Activated CD4-positive, alpha-beta T cell treated with anti-CD3 and anti-CD28 coated beads for 36 hours (primary cell): ENCODE measurements at regions of chr3 and their contacts with region 1.

Region 1: DNA sequence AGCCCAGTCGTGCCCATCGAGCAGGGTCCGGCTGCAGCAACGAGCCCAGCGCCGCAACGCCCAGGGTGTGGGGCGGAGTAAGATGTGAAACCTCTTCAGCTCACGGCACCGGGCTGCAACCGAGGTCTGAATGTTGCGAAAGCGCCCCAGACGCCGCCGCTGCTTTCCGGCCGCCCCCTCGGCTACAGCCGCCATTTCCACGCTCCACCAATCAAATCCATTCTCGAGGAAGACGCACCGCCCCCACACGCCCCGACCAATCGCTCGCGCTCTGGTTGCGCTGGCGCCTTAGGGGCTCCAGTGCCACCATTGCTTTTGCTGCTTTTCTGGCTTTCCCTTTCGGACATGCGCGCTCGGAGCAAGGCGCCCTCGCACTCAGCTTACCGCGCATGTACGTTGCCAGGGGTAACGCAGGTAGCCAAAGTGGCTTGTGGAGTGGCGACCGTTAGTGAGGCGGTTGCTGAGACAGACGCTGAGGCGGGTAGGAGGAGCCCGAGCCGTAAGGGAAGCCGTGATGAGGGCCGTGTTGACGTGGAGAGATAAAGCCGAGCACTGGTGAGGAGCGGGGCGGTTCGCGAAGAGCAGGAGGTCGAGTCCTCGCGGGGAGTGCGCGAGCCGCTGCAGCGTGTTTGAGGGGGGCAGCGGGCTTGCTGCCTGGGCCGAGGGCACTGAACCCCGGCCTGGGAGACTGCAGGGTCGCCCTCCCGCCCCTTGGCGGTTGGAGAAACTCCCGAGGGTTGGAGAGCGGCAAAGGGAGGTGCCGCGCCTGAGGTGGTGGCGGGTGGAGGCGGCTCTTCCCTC is at the starts of genes IFT122 and MBD4:
- DNase-seq: peak; percentile 99
- ATAC-seq: peak; percentile 90
- H3K4me3 Mint-ChIP-seq: peak within 1 kb of the TSS; percentile 100
- H3K27ac Mint-ChIP-seq: peak within 1 kb of the TSS; percentile 91
- H3K4me1 Mint-ChIP-seq: peaks cover 63% of the 10 kb centered on the region
- H3K27me3 Mint-ChIP-seq: no peaks in the 10 kb centered on the region
- total RNA-seq, gene IFT122: 18.4 to 22.6 TPM
- total RNA-seq, gene MBD4: 51.3 to 52.4 TPM

Region 2: GRCh38 chr3:128650096-128651050 is 789.6 kb before region 1 on chr3 and contains the start of gene RPN1:
- CTCF ChIA-PET with region 1: no interaction called
- POLR2A ChIA-PET with region 1: no interaction called
- intact Hi-C with region 1: loop called in 1 of 2 experiments (anchors 1 kb)
- DNase-seq: peak; percentile 97
- ATAC-seq: peak; percentile 97
- H3K4me3 Mint-ChIP-seq: peak within 1 kb of the TSS; percentile 81
- H3K27ac Mint-ChIP-seq: peak within 1 kb of the TSS; percentile 85
- H3K4me1 Mint-ChIP-seq: peaks cover 39% of the 10 kb centered on the region
- H3K27me3 Mint-ChIP-seq: no peaks in the 10 kb centered on the region
- total RNA-seq, gene RPN1: 138 to 153 TPM

Region 3: GRCh38 chr3:129120254-129121004 is 319.6 kb before region 1 on chr3:
- CTCF ChIA-PET with region 1: no interaction called
- POLR2A ChIA-PET with region 1: no interaction called
- intact Hi-C with region 1: loop called in 1 of 2 experiments (anchors 5 kb)
- DNase-seq: peak; percentile 96
- ATAC-seq: peak; percentile 69
- H3K4me3 Mint-ChIP-seq: peak overlapping the region; percentile 91
- H3K27ac Mint-ChIP-seq: peak overlapping the region; percentile 95
- H3K4me1 Mint-ChIP-seq: peaks cover 46% of the 10 kb centered on the region
- H3K27me3 Mint-ChIP-seq: no peaks in the 10 kb centered on the region

Region 4: DNA sequence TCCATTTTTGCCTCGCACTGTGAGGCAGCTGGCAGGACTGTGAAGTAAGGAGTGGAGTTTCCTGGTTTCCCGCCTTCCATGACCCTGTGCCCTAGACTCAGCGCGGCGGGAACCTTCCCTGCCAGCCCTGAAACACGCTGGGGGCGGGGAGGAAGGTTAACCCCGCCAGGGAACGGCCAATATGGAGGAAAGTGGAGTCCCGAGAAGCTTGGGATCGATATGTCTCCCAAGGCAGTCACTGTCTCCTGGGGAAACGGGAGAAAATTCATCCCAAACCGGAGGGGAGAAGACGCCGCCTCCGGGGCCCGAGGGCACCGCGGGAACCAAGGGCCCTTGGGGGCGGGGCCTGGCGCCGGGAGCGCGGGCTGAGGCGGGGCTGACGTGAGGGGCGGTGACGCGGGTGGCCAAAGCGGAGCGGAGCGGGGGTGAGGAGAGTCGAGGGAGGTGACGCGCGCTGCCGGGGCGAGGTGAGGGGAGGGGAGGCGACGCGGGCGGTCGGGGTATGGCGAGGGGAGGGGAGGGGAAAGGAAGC is 161.5 kb before region 1 on chr3 and contains the start of gene HMCES:
- CTCF ChIA-PET with region 1: no interaction called
- POLR2A ChIA-PET with region 1: no interaction called
- intact Hi-C with region 1: loop called in 1 of 2 experiments (anchors 1 kb)
- DNase-seq: peak; percentile 98
- ATAC-seq: peak; percentile 84
- H3K4me3 Mint-ChIP-seq: peak within 1 kb of the TSS; percentile 89
- H3K27ac Mint-ChIP-seq: peak within 1 kb of the TSS; percentile 95
- H3K4me1 Mint-ChIP-seq: peaks cover 55% of the 10 kb centered on the region
- H3K27me3 Mint-ChIP-seq: no peaks in the 10 kb centered on the region
- total RNA-seq, gene HMCES: 43.1 to 56.7 TPM

Region 5: DNA sequence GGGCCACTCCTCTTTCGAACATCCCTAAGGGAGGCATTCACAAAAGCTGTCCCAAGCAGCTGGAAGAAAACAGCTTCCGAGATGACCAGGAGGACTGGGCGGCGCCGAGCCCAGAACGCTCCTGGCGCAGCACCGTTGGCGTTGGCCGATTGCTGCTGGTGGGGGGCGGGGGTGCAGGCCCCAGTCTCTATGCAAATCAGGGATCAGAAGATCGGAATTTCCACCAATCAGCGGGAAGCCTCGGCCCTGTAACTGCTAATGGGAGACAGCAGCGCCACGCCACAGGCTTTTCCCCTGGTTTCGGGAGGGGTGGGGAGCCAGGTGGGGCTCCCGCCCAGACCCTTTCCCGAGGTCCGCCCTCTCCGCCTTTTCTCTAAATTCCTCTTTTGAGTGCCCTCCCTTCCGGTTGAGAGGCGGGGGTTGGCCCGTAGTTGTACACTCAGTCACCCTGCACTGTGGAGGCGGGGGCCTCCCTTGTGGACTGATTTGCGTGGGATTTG is 134.4 kb before region 1 on chr3:
- CTCF ChIA-PET with region 1: no interaction called
- POLR2A ChIA-PET with region 1: no interaction called
- intact Hi-C with region 1: no loop called
- DNase-seq: peak; percentile 70
- ATAC-seq: peak; percentile 60
- H3K4me3 Mint-ChIP-seq: peak overlapping the region; percentile 23
- H3K27ac Mint-ChIP-seq: peak overlapping the region; percentile 76
- H3K4me1 Mint-ChIP-seq: peaks cover 38% of the 10 kb centered on the region
- H3K27me3 Mint-ChIP-seq: no peaks in the 10 kb centered on the region

Region 6: GRCh38 chr3:129358772-129359371 is 81.1 kb before region 1 on chr3:
- CTCF ChIA-PET with region 1: no interaction called
- POLR2A ChIA-PET with region 1: no interaction called
- intact Hi-C with region 1: no loop called
- DNase-seq: no peak
- ATAC-seq: no peak
- H3K4me3 Mint-ChIP-seq: no peak overlapping the region
- H3K27ac Mint-ChIP-seq: no peak overlapping the region
- H3K4me1 Mint-ChIP-seq: no peaks in the 10 kb centered on the region
- H3K27me3 Mint-ChIP-seq: no peaks in the 10 kb centered on the region

Region 7: GRCh38 chr3:129428376-129429079 is 11.5 kb before region 1 on chr3 and contains the start of gene EFCAB12:
- CTCF ChIA-PET with region 1: interaction called, 8 read pairs
- POLR2A ChIA-PET with region 1: interaction called, 10 read pairs
- intact Hi-C with region 1: loop called (anchors 1 kb)
- DNase-seq: peak; percentile 95
- ATAC-seq: peak; percentile 96
- H3K4me3 Mint-ChIP-seq: peak within 1 kb of the TSS; percentile 59
- H3K27ac Mint-ChIP-seq: peak within 1 kb of the TSS; percentile 63
- H3K4me1 Mint-ChIP-seq: peaks cover 43% of the 10 kb centered on the region
- H3K27me3 Mint-ChIP-seq: no peaks in the 10 kb centered on the region
- total RNA-seq, gene EFCAB12: 0.56 to 0.73 TPM

Region 8: GRCh38 chr3:130111185-130111864 is 671.3 kb after region 1 on chr3:
- CTCF ChIA-PET with region 1: no interaction called
- POLR2A ChIA-PET with region 1: no interaction called
- intact Hi-C with region 1: loop called (anchors 1 to 5 kb)
- DNase-seq: peak; percentile 100
- ATAC-seq: peak; percentile 100
- H3K4me3 Mint-ChIP-seq: peak overlapping the region; percentile 92
- H3K27ac Mint-ChIP-seq: peak overlapping the region; percentile 98
- H3K4me1 Mint-ChIP-seq: peaks cover 16% of the 10 kb centered on the region
- H3K27me3 Mint-ChIP-seq: no peaks in the 10 kb centered on the region